A673 (cell line): ENCODE measurements at regions of chr12 and their contacts with region 1.

Region 1: DNA sequence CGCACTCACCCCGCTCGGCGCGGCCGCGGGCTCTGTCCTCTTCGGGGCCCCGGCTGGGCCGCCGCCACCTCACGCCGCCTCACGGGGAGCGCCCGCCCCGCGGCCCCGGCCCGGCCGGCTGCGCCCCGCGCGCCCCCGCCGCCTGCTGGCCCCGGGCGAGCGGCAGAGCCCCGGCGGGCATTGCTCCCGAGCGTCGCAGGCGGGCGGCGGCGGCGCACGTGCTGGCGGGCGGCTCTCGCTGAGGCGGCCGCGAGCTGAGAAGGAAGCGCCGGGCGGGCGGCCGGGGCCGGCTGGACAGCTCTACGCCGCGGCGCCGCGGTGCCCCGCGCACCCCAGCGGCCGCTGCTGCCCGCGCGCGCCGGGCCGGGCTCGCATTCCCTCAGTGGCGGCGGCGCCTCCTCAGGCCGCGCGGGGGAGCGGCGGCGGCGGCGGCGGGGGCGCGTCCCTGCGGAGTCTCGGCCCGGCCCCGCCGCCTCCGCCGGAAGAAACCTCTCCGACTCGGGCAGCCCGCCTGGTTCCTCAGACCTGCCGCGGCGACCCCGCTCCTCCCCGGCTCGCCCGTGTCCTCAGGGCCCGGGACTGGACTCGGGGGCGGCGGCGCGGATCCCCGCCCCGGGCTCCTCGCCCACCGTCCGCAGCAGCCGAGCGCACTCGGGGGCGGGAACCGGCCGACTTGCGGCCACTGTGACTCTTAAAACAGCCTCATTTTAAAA is at the start of gene PITPNM2:
- DNase-seq: peak; percentile 72
- H3K4me3 ChIP-seq: peak within 1 kb of the TSS; percentile 70
- H3K27ac ChIP-seq: peak within 1 kb of the TSS; percentile 76
- H3K4me1 ChIP-seq: peaks cover 12% of the 10 kb centered on the region
- H3K27me3 ChIP-seq: no peaks in the 10 kb centered on the region
- CTCF ChIP-seq: no peak
- total RNA-seq, gene PITPNM2: 6.4 and 8.9 TPM in 2 replicates

Region 2: DNA sequence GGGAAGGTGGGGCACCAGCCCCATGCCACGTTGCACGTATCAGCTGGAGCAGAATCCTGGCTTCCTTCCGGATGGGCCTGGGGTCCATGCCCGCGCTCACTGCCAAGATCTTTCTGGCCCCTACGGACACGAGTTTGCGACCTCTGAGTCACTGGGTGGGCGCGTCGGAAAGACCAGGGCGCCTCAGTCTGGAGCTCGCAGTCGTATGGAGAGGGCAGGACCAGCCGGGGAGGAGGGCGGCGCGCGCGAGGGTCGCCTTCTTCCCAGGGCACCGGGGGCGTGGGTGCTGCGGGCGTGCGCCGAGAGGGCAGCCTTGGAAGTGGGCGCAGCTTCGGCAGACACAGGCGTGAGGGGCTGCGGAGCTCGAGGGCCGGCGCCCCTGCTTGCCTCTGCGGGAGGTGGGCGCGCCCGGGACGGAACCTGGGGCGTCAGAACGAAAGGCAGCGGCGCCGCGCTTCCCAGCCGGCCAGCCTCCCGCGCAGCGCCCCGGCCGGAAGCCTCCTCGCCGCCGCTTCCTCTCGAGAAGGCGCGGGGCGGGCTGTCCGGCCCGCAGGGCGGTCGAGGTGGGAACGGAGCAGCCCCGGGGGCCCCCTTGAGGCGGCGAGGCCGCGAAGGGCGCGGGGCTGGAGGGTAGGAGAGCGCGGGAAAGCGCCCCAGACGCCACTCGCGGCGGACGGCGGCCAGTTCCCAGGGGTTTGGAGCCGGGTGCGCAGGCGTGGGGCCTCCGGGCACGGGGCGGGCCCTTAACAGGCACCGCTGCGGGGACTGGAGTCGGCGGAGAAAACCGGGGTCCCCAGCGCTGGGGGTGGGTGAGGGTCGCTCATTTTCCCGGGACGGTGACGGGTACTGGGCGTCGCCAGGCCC is 170.5 kb before region 1 on chr12 and contains the start of gene ARL6IP4:
- CTCF ChIA-PET with region 1: no interaction called
- POLR2A ChIA-PET with region 1: no interaction called
- intact Hi-C with region 1: loop called (anchors 5 kb)
- DNase-seq: peak; percentile 79
- H3K4me3 ChIP-seq: peak within 1 kb of the TSS; percentile 72
- H3K27ac ChIP-seq: peak within 1 kb of the TSS; percentile 95
- H3K4me1 ChIP-seq: peaks cover 21% of the 10 kb centered on the region
- H3K27me3 ChIP-seq: no peaks in the 10 kb centered on the region
- CTCF ChIP-seq: no peak
- total RNA-seq, gene ARL6IP4: 180 and 189 TPM in 2 replicates

Region 3: GRCh38 chr12:123034865-123035264 is 116.0 kb before region 1 on chr12:
- CTCF ChIA-PET with region 1: no interaction called
- POLR2A ChIA-PET with region 1: no interaction called
- intact Hi-C with region 1: no loop called
- DNase-seq: peak; percentile 46
- H3K4me3 ChIP-seq: no peak overlapping the region
- H3K27ac ChIP-seq: no peak overlapping the region
- H3K4me1 ChIP-seq: no peaks in the 10 kb centered on the region
- H3K27me3 ChIP-seq: no peaks in the 10 kb centered on the region
- CTCF ChIP-seq: no peak